CD4-positive, alpha-beta memory T cell (primary cell): ENCODE measurements at regions of chr17 and their contacts with region 1.

Region 1: DNA sequence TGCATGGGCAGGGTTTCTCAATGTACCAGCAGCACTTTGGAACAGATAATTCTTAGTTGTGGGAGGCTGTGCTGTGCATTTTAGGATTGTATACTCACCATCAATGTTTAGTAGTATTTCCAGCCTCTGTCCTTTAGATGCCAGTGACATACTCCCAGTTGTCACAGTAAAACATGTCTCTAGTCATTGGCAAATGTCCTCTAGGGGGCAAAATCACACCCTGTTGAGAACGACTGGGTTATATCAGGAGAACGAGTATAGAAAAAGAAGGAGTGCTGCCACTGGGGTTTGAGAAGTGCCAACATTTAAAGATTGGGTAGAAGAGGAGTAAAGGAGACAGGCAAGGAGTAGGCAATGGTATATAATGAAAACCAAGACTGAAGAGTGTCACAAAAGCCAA is 37.9 kb upstream of the SMIM36 start:
- DNase-seq: peak in 1 of 5 donors; percentile 5
- H3K4me3 ChIP-seq: no peak overlapping the region
- H3K4me3 Mint-ChIP-seq: no peak overlapping the region
- H3K27ac ChIP-seq: no peak overlapping the region
- H3K27ac Mint-ChIP-seq: no peak overlapping the region
- H3K4me1 ChIP-seq: no peaks in the 10 kb centered on the region
- H3K4me1 Mint-ChIP-seq: peaks cover 0 to 1% (median 0%) of the 10 kb centered on the region in 4 donors
- H3K27me3 ChIP-seq: no peaks in the 10 kb centered on the region
- H3K27me3 Mint-ChIP-seq: peaks cover 4 to 12% of the 10 kb centered on the region in 2 donors

Region 2: DNA sequence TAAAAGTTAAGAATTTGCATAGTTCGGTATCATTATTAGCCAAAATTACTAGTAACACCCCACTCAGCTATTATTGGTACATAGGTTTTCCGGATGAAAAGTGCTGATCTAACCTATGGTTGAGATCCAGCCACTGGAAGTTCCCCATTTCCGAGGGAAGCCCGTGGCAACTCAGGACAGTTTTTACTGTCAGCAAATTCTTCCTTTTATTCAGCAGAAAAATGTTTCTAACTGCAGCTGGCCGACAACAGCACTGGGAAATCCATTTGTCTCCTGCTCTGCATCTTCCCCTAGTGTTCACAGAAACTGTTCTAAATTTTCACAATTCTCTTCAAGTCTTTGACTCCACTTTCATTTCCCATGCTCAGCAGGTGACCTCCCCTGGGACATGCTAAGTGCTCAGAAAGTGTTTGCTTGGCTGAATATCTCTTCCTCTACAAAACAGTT is 112.0 kb before region 1 on chr17:
- CTCF ChIA-PET with region 1: no interaction called
- POLR2A ChIA-PET with region 1: no interaction called
- intact Hi-C with region 1: no loop called
- DNase-seq: peak in 1 of 5 donors; percentile 31
- H3K4me3 ChIP-seq: no peak overlapping the region
- H3K4me3 Mint-ChIP-seq: no peak overlapping the region
- H3K27ac ChIP-seq: no peak overlapping the region
- H3K27ac Mint-ChIP-seq: peak overlapping the region in 1 of 7 donors; percentile 62
- H3K4me1 ChIP-seq: peaks cover 6% of the 10 kb centered on the region
- H3K4me1 Mint-ChIP-seq: peaks cover 8 to 13% (median 12%) of the 10 kb centered on the region in 4 donors
- H3K27me3 ChIP-seq: no peaks in the 10 kb centered on the region
- H3K27me3 Mint-ChIP-seq: peaks cover 3 to 11% of the 10 kb centered on the region in 2 donors

Region 3: GRCh38 chr17:55564081-55564480 is 14.9 kb after region 1 on chr17:
- CTCF ChIA-PET with region 1: no interaction called
- POLR2A ChIA-PET with region 1: no interaction called
- intact Hi-C with region 1: no loop called
- DNase-seq: no peak
- H3K4me3 ChIP-seq: no peak overlapping the region
- H3K4me3 Mint-ChIP-seq: no peak overlapping the region
- H3K27ac ChIP-seq: no peak overlapping the region
- H3K27ac Mint-ChIP-seq: no peak overlapping the region
- H3K4me1 ChIP-seq: no peaks in the 10 kb centered on the region
- H3K4me1 Mint-ChIP-seq: no peaks in the 10 kb centered on the region
- H3K27me3 ChIP-seq: no peaks in the 10 kb centered on the region
- H3K27me3 Mint-ChIP-seq: peaks cover 3 to 13% of the 10 kb centered on the region in 2 donors

Region 4: DNA sequence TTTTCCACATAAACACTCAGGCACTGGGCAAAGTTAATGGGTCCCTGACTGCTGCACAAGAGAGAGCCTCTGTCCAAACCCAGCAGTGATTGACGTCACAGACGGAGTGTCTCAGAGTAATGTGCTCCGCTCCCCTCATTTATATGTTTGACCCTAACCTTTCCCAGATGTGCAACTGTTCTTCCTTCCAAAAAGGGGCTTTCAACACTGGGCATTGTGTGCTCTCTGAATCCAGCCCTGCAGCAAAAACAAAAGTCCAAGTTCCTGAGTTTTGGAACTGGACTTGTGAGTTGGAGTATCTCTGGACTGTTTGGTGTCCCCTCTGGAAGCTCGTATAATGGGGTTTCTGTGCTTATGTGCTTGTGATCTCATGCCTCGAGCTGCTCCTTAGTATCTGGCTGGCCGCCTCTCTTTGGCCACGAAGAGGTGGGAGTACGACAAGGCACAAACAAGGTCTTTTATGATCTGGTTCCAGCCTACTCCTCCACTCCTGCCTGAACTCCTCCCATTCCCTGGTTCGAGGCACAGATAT is 38.5 kb after region 1 on chr17:
- CTCF ChIA-PET with region 1: interaction called, 4 read pairs
- POLR2A ChIA-PET with region 1: no interaction called
- intact Hi-C with region 1: loop called (anchors 5 kb)
- DNase-seq: no peak
- H3K4me3 ChIP-seq: no peak overlapping the region
- H3K4me3 Mint-ChIP-seq: no peak overlapping the region
- H3K27ac ChIP-seq: no peak overlapping the region
- H3K27ac Mint-ChIP-seq: no peak overlapping the region
- H3K4me1 ChIP-seq: no peaks in the 10 kb centered on the region
- H3K4me1 Mint-ChIP-seq: peaks cover 10 to 13% (median 11%) of the 10 kb centered on the region in 4 donors
- H3K27me3 ChIP-seq: no peaks in the 10 kb centered on the region
- H3K27me3 Mint-ChIP-seq: no peaks in the 10 kb centered on the region

Region 5: DNA sequence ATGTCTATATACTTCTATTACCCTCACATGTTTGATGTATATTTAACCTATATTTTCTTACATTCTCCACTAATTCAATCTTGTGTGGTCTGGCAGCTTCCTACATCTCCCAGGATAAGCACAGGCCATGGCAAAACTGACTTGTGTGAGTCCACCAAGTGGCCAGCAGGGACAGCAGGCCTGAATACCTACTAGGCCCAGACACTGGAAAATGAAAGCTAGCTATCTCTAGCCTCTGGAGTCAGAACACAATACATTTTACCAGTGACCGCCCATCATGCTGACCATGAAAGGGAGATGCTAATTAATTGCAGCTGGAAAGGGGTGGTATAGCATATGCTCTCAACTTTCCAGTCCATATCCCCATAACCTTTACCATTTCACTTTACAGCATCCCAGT is 334.0 kb after region 1 on chr17:
- CTCF ChIA-PET with region 1: no interaction called
- POLR2A ChIA-PET with region 1: no interaction called
- intact Hi-C with region 1: no loop called
- DNase-seq: no peak
- H3K4me3 ChIP-seq: no peak overlapping the region
- H3K4me3 Mint-ChIP-seq: no peak overlapping the region
- H3K27ac ChIP-seq: no peak overlapping the region
- H3K27ac Mint-ChIP-seq: no peak overlapping the region
- H3K4me1 ChIP-seq: no peaks in the 10 kb centered on the region
- H3K4me1 Mint-ChIP-seq: no peaks in the 10 kb centered on the region
- H3K27me3 ChIP-seq: no peaks in the 10 kb centered on the region
- H3K27me3 Mint-ChIP-seq: peaks cover 0 to 5% of the 10 kb centered on the region in 2 donors

Region 6: GRCh38 chr17:55983096-55983495 is 434.0 kb after region 1 on chr17:
- CTCF ChIA-PET with region 1: no interaction called
- POLR2A ChIA-PET with region 1: no interaction called
- intact Hi-C with region 1: no loop called
- DNase-seq: no peak
- H3K4me3 ChIP-seq: no peak overlapping the region
- H3K4me3 Mint-ChIP-seq: no peak overlapping the region
- H3K27ac ChIP-seq: no peak overlapping the region
- H3K27ac Mint-ChIP-seq: no peak overlapping the region
- H3K4me1 ChIP-seq: no peaks in the 10 kb centered on the region
- H3K4me1 Mint-ChIP-seq: no peaks in the 10 kb centered on the region
- H3K27me3 ChIP-seq: no peaks in the 10 kb centered on the region
- H3K27me3 Mint-ChIP-seq: peaks cover 0 to 1% of the 10 kb centered on the region in 2 donors